Left lung (tissue), 14 donors: ENCODE measurements at regions of chr17 and their contacts with region 1.

Region 1: DNA sequence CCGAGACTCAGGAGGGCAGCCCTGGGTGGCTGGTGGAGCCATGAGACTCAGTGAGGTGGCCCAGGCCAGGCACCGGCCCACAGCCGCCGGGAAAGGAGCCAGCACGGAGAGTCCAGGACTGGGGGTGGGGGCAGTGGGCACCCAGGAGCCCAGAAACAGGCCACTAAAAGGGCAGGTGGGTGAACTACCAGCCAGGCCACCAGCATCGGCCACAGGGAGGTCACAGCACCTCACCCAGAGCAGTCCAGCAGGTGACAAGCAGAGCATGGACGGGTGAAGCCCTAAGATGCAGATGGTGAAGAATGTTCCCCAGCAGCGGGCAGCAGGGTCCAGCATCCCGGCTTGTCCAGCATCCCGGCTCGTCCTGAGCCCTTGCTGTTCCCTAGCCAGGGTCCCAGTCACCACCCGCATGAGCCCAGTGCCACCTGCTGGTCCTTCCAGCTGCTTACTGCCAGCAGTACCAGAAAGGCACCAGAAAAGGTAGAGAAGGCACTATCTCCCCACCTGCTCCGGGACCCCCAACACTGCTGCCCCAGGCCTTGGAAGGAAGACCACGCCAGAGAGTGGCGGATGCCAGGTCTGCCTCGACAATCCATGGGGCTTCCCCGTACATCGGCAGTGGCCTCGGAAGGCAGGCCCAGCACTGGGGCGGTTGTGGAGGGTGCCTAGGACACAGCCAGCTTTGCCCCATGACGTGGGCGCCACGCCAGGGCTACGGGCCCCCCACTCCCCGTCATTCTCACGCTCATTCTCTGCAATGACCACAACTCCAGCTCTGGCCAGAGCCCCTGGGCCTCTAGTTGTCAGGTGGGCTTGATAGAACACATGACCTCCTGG is 1.6 kb downstream of the CENPX start:
- DNase-seq: peak; percentile 60 to 87 (median 79)
- ATAC-seq: peak; percentile 23
- H3K4me3 ChIP-seq: peak overlapping the region in 1 of 2 donors; percentile 99
- H3K27ac ChIP-seq: no peak overlapping the region
- H3K4me1 ChIP-seq: peaks cover 25 to 39% of the 10 kb centered on the region in 2 donors
- H3K27me3 ChIP-seq: no peaks in the 10 kb centered on the region
- CTCF ChIP-seq: peak; percentile 60 to 66

Region 2: GRCh38 chr17:81941790-81942553 is 79.1 kb before region 1 on chr17:
- intact Hi-C with region 1: no loop called
- DNase-seq: no peak
- ATAC-seq: no peak
- H3K4me3 ChIP-seq: no peak overlapping the region
- H3K27ac ChIP-seq: no peak overlapping the region
- H3K4me1 ChIP-seq: peaks cover 0 to 9% of the 10 kb centered on the region in 2 donors
- H3K27me3 ChIP-seq: peaks cover 0 to 65% of the 10 kb centered on the region in 2 donors
- CTCF ChIP-seq: no peak

Region 3: DNA sequence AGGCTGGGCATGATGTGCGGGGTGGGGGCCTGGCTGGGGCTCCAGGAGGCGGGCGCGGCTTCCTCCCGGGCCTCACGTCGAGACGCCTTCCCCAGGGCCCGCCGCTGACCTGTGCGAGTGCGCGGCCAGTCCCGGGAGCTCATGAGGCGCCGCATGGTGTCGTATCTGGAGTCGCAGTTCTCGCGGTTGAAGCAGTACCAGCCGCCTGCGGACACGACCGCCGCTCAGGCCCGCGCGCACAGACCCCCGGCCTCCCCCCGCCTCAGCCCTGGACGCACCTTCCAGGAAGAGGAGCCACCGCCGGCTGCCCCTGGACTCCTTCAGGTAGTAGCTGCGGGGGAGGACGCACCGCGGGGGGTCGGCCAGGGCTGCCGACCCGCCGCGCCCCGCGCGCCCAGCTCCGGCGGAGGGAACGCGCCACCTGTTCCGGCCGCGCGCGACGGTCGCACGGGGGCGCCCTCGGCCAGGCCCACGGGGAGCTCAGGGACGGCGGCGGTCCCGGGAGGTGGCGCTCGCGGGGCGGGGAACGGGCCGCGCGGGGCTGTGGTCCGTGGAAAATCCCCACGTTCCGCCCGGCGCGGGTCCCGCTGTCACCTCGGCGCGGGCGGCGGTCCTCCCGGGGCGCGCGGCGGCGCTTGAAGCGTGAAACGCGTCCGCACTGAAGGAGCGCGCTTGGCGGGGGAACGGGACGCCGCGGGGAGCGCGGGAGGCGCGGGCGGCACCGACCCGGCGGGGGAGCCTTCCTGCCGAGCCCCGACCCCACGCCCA is 61.6 kb before region 1 on chr17:
- intact Hi-C with region 1: loop called in 1 of 2 experiments (anchors 1 kb)
- DNase-seq: peak; percentile 52 to 96 (median 69)
- ATAC-seq: peak; percentile 95
- H3K4me3 ChIP-seq: peak overlapping the region; percentile 24 to 47
- H3K27ac ChIP-seq: no peak overlapping the region
- H3K4me1 ChIP-seq: peaks cover 8 to 30% of the 10 kb centered on the region in 2 donors
- H3K27me3 ChIP-seq: peaks cover 26 to 81% of the 10 kb centered on the region in 2 donors
- CTCF ChIP-seq: peak; percentile 69 to 89

Region 4: GRCh38 chr17:82230627-82231311 is 209.7 kb after region 1 on chr17:
- intact Hi-C with region 1: no loop called
- DNase-seq: peak; percentile 82 to 97 (median 92)
- ATAC-seq: peak; percentile 70
- H3K4me3 ChIP-seq: peak overlapping the region; percentile 71 to 83
- H3K27ac ChIP-seq: peak overlapping the region; percentile 95 to 100
- H3K4me1 ChIP-seq: peaks cover 22 to 92% of the 10 kb centered on the region in 2 donors
- H3K27me3 ChIP-seq: peaks cover 0 to 6% of the 10 kb centered on the region in 2 donors
- CTCF ChIP-seq: peak; percentile 56 to 86